Transverse colon (tissue), 4 donors: ENCODE measurements at regions of chr17 and their contacts with region 1.

Region 1: GRCh38 chr17:29645515-29646051 is 22.9 kb upstream of the CORO6 start:
- DNase-seq: peak; percentile 41
- H3K4me3 ChIP-seq: no peak overlapping the region
- H3K27ac ChIP-seq: peak overlapping the region; percentile 68 to 77 (median 70)
- H3K4me1 ChIP-seq: peaks cover 0 to 30% (median 6%) of the 10 kb centered on the region in 4 donors
- H3K27me3 ChIP-seq: no peaks in the 10 kb centered on the region
- CTCF ChIP-seq: no peak
- EP300 ChIP-seq: no peak
- POLR2A ChIP-seq: no peak

Region 2: DNA sequence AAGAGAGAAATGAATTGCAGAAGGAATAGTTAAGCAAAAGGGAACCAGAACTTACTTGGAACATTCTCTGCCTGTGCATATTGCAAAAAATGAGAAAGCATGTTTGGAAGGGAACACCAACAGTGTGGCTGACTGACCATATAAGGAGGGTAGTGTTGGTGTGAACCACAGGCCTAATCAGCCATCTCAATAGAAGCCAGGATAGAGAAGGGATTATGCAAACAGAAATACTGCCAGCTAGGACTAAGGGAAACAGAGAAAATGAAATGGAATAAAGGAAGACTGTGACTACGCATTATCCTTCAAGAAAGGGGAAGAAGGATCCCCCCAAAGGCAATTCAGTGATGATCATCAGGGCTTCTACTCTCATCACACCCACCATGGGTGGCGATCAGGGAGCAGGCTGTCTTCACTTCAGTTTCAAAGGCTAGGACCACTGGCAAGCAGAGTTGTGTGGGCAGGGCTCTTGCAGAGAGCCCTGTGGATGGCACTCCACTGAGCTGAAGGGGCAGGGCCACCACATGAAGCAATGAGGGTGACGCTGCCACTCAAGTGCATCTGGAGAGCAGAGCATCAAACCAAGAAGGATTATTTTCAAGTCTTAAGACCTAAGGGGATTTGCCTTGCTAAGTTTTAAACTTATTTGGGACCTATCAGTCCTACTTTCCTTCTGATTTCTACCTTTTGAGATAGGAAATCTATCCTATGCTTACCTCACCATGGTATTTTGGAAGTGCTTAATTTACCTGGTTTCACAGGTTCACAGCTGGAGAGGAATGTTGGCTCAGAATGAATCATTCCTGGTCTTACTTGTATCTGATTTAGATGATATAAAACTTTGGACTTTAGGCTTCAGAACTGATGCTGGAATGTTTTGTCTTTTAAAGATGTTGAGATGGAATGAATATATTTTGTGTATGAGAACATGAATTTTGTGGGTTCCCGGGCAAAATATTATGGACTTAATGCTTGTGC is 143.9 kb after region 1 on chr17:
- in situ Hi-C with region 1: loop called in 3 of 4 experiments (anchors 10 to 25 kb)
- intact Hi-C with region 1: no loop called
- DNase-seq: no peak
- H3K4me3 ChIP-seq: no peak overlapping the region
- H3K27ac ChIP-seq: peak overlapping the region in 1 of 4 donors; percentile 24
- H3K4me1 ChIP-seq: peaks cover 0 to 7% (median 2%) of the 10 kb centered on the region in 4 donors
- H3K27me3 ChIP-seq: no peaks in the 10 kb centered on the region
- CTCF ChIP-seq: no peak
- EP300 ChIP-seq: no peak
- POLR2A ChIP-seq: no peak

Region 3: GRCh38 chr17:29931231-29931932 is 285.8 kb after region 1 on chr17:
- in situ Hi-C with region 1: loop called in 1 of 4 experiments (anchors 25 kb)
- intact Hi-C with region 1: no loop called
- DNase-seq: peak; percentile 70
- H3K4me3 ChIP-seq: peak overlapping the region in 2 of 4 donors; percentile 67 to 70
- H3K27ac ChIP-seq: peak overlapping the region; percentile 88 to 99 (median 94)
- H3K4me1 ChIP-seq: peaks cover 5 to 36% (median 27%) of the 10 kb centered on the region in 4 donors
- H3K27me3 ChIP-seq: no peaks in the 10 kb centered on the region
- CTCF ChIP-seq: peak; percentile 87 to 89 (median 88)
- EP300 ChIP-seq: no peak
- POLR2A ChIP-seq: no peak